Activated CD8-positive, alpha-beta memory T cell treated with anti-CD3 and anti-CD28 coated beads, Interleukin-2, amount 10 ng/mL, durations not matched to agents 7 days and 5 days (primary cell): ENCODE measurements at regions of chr17 and their contacts with region 1.

Region 1: GRCh38 chr17:2064980-2065785 is 10.3 kb downstream of the HIC1 start:
- DNase-seq: peak; percentile 94
- ATAC-seq: peak; percentile 67
- H3K4me3 Mint-ChIP-seq: peak overlapping the region; percentile 45
- H3K27ac Mint-ChIP-seq: peak overlapping the region; percentile 96
- H3K4me1 Mint-ChIP-seq: peaks cover 99% of the 10 kb centered on the region
- H3K27me3 Mint-ChIP-seq: no peaks in the 10 kb centered on the region

Region 2: GRCh38 chr17:2090804-2091534 is 25.8 kb after region 1 on chr17:
- CTCF ChIA-PET with region 1: interaction called, 198 read pairs
- DNase-seq: no peak
- ATAC-seq: no peak
- H3K4me3 Mint-ChIP-seq: peak overlapping the region; percentile 91
- H3K27ac Mint-ChIP-seq: peak overlapping the region; percentile 99
- H3K4me1 Mint-ChIP-seq: peaks cover 67% of the 10 kb centered on the region
- H3K27me3 Mint-ChIP-seq: no peaks in the 10 kb centered on the region